Activated CD4-positive, alpha-beta T cell treated with anti-CD3 and anti-CD28 coated beads for 36 hours (primary cell): ENCODE measurements at regions of chr7 and their contacts with region 1.

Region 1: DNA sequence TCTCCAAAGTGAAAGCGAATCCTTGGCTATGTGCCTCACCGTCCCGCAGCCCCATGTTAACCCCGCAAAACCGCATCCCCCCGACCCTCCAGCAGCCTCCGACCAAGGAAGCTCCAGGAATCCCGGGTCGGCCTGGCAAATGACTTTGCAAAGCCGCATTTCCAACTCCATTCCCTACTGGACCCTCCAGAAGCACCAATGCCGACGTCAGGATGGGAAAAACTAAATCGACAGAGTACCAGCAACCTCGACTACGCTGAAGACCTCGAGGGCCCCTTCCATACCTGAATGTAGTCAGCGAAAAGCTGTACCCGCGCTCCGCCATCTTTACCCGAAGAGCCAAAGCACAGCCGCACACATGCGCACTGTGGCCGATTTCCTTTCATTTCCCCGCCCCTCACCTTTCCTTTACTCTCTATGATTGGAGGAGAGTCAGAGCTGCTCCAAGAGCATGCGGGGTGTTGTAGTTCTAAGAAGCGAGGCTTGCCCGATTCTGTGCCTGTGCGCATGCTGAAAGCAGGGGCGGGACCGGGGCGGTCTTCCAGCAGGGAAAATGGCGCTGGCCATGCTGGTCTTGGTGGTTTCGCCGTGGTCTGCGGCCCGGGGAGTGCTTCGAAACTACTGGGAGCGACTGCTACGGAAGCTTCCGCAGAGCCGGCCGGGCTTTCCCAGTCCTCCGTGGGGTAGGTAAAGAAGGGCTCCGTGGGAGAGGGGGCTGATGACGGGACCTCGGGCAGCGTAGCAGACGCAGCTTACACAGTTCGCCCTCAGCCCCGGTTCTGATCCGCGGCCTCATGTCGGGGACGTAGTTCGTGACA is at the starts of genes MRPL32 and PSMA2:
- DNase-seq: peak; percentile 95
- ATAC-seq: peak; percentile 100
- H3K4me3 Mint-ChIP-seq: peak within 1 kb of the TSS; percentile 98
- H3K27ac Mint-ChIP-seq: peak within 1 kb of the TSS; percentile 100
- H3K4me1 Mint-ChIP-seq: peaks cover 67% of the 10 kb centered on the region
- H3K27me3 Mint-ChIP-seq: no peaks in the 10 kb centered on the region
- total RNA-seq, gene MRPL32: 74.7 to 75.5 TPM
- total RNA-seq, gene PSMA2: 109 to 217 TPM

Region 2: GRCh38 chr7:42886129-42886528 is 45.9 kb before region 1 on chr7:
- CTCF ChIA-PET with region 1: interaction called, 3 read pairs
- POLR2A ChIA-PET with region 1: interaction called, 8 read pairs
- intact Hi-C with region 1: loop called in 1 of 2 experiments (anchors 2 kb)
- DNase-seq: no peak
- ATAC-seq: no peak
- H3K4me3 Mint-ChIP-seq: no peak overlapping the region
- H3K27ac Mint-ChIP-seq: no peak overlapping the region
- H3K4me1 Mint-ChIP-seq: peaks cover 19% of the 10 kb centered on the region
- H3K27me3 Mint-ChIP-seq: peaks cover 2% of the 10 kb centered on the region

Region 3: DNA sequence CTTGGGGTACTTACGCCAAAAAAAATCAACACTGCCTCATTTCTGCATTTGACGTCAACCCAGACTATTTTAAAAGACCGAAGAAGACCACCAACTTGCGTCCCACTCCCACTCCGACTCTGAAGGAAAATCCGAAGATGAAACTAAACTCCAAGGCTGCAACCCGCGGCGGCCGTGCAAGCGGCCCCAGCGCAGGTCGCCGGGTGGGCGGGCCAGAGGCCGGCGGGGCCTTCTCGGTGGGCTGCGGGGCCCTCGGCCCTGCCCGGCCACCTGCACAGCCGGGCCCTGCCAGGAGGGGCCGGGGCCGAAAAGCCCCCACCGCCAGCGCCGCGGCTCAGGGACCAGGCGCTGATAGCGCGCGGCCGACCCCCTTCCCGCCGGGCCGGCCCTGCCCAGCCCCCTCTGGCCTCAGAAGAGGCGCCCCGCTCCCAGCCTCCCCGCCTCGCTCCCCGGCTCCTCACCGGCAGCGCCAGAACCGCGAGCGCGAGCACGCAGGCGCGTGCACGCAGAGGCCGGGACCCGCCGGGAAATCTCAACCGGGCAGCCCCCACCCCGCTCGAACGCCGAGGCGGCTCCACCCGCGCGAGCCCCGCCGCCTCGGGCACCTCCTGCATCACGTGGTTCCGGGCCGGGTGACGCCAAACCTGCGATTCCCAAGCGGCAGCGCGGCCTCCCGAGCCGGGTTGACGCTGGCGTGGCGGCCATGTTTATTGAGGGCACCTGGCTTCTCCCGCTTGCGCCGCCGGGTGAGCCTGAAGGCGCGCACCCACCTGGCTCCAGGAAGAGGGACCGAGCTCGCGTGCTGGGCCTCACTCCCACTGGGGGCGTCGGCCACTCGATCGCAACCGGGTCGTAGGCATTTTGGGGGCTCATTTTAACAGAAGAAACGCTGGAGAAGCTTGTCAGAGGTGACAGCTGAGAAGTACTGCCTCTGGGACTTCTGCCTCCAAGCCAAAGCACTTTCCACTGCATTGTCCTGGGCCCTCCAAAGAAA is 20.3 kb before region 1 on chr7 and contains the start of gene C7orf25:
- CTCF ChIA-PET with region 1: interaction called, 8 read pairs
- POLR2A ChIA-PET with region 1: interaction called, 7 read pairs
- intact Hi-C with region 1: loop called (anchors 1 kb)
- DNase-seq: peak; percentile 98
- ATAC-seq: peak; percentile 89
- H3K4me3 Mint-ChIP-seq: peak within 1 kb of the TSS; percentile 87
- H3K27ac Mint-ChIP-seq: peak within 1 kb of the TSS; percentile 92
- H3K4me1 Mint-ChIP-seq: peaks cover 56% of the 10 kb centered on the region
- H3K27me3 Mint-ChIP-seq: no peaks in the 10 kb centered on the region
- total RNA-seq, gene C7orf25: 2.7 to 5.4 TPM

Region 4: DNA sequence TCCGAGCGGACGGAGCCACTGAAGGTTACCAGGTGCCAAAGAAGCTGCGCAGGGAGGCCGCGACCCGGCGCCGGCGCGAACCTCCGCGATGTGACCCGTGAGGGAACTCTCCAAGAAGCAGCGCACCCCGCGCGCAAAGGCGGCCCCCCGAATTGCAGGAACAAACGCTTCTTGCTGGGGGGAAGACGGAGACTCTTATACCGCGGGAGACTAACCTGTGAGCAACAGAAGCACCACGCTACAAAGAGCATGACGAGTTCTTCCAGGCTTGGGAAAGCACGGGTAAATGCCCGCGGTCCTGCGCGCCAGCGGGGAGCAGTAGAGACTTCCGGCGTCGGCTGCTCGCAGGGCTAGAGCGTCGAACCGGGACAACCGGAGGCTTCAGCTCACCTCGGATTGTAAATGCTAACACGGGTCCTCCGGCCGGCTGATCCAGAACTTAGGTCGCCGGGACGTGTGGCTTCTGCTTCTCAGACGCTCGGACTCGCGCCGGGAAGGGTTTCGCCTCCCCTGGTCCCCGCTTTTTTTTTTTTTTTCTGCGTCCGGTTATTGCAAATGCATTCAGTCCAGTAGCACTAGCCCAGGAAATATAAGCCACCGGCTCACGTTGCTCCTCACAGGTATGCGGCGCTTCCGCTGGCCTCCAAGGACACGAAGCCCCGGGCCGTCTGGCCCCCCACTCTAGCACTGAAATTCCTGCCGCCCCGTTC is 797.3 kb after region 1 on chr7 and contains the start of gene COA1:
- CTCF ChIA-PET with region 1: no interaction called
- POLR2A ChIA-PET with region 1: no interaction called
- intact Hi-C with region 1: loop called (anchors 1 to 10 kb)
- DNase-seq: peak; percentile 89
- ATAC-seq: peak; percentile 94
- H3K4me3 Mint-ChIP-seq: peak within 1 kb of the TSS; percentile 90
- H3K27ac Mint-ChIP-seq: peak within 1 kb of the TSS; percentile 91
- H3K4me1 Mint-ChIP-seq: peaks cover 36% of the 10 kb centered on the region
- H3K27me3 Mint-ChIP-seq: no peaks in the 10 kb centered on the region
- total RNA-seq, gene COA1: 76.9 to 77.1 TPM

Region 5: GRCh38 chr7:43869006-43869866 is 937.2 kb after region 1 on chr7 and contains the start of gene MRPS24:
- CTCF ChIA-PET with region 1: no interaction called
- POLR2A ChIA-PET with region 1: no interaction called
- intact Hi-C with region 1: loop called in 1 of 2 experiments (anchors 10 kb)
- DNase-seq: peak; percentile 98
- ATAC-seq: peak; percentile 96
- H3K4me3 Mint-ChIP-seq: peak within 1 kb of the TSS; percentile 83
- H3K27ac Mint-ChIP-seq: peak within 1 kb of the TSS; percentile 84
- H3K4me1 Mint-ChIP-seq: peaks cover 35% of the 10 kb centered on the region
- H3K27me3 Mint-ChIP-seq: no peaks in the 10 kb centered on the region
- total RNA-seq, gene MRPS24: 121 to 149 TPM

Region 6: DNA sequence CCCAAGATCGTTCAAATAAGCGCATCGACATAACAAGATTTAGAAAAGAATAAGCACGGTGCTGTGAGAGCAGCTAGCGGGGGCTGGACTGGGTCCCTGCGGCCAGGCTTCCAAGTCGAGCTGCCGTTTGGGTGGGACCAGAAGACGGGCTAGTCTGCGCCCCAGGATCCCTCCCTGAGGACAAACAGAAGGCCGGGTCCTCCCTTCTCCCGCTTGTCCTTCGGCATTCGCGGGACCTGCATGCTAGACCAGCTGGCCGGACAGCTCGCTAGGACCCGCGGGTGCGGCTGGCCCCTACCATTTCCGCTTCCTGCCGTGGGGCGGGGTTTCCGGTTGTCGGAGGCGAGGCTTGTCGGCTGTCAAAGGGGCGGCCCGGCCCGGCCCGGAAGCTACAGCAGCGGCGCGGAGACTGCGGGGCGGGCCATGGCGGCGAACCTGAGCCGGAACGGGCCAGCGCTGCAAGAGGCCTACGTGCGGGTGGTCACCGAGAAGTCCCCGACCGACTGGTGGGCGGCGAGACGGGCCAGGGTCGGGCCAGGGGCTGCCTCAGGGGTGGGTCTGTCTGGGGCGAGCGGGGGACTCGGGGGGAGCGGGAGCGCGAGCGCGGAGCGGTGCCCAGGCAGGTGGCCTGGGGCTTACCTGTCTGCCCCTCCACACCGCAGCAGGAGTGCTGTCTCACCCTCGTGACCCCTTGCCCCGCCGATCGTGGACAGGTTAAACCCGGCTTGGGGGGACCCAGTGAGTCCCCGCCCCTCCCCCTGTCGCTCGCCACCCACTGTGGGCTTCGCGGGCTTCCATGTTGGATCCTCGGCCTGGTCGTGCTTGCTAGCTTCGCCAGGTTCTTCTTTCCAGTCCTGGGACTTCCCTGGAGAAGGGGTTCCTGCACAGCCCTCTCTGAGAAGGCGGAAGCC is 1112.5 kb after region 1 on chr7 and contains the start of gene DBNL:
- CTCF ChIA-PET with region 1: no interaction called
- POLR2A ChIA-PET with region 1: no interaction called
- intact Hi-C with region 1: loop called in 1 of 2 experiments (anchors 5 kb)
- DNase-seq: peak; percentile 95
- ATAC-seq: peak; percentile 72
- H3K4me3 Mint-ChIP-seq: peak within 1 kb of the TSS; percentile 88
- H3K27ac Mint-ChIP-seq: peak within 1 kb of the TSS; percentile 93
- H3K4me1 Mint-ChIP-seq: peaks cover 52% of the 10 kb centered on the region
- H3K27me3 Mint-ChIP-seq: no peaks in the 10 kb centered on the region
- total RNA-seq, gene DBNL: 106 to 117 TPM